Upper lobe of right lung (tissue), 1 donor: ENCODE measurements at regions of chr1 and their contacts with region 1.

Region 1: GRCh38 chr1:99180343-99180808 is 83.9 kb upstream of the PLPPR4 start:
- DNase-seq: no peak
- ATAC-seq: peak; percentile 96
- H3K4me3 ChIP-seq: no peak overlapping the region
- H3K27ac ChIP-seq: no peak overlapping the region
- H3K4me1 ChIP-seq: no peaks in the 10 kb centered on the region
- H3K27me3 ChIP-seq: no peaks in the 10 kb centered on the region
- CTCF ChIP-seq: peak; percentile 83

Region 2: GRCh38 chr1:99580451-99580850 is 400.1 kb after region 1 on chr1:
- intact Hi-C with region 1: no loop called
- DNase-seq: no peak
- ATAC-seq: no peak
- H3K4me3 ChIP-seq: no peak overlapping the region
- H3K27ac ChIP-seq: no peak overlapping the region
- H3K4me1 ChIP-seq: no peaks in the 10 kb centered on the region
- H3K27me3 ChIP-seq: no peaks in the 10 kb centered on the region
- CTCF ChIP-seq: no peak

Region 3: GRCh38 chr1:99707535-99708142 is 527.3 kb after region 1 on chr1:
- intact Hi-C with region 1: loop called (anchors 10 kb)
- DNase-seq: peak; percentile 65
- ATAC-seq: peak; percentile 95
- H3K4me3 ChIP-seq: no peak overlapping the region
- H3K27ac ChIP-seq: no peak overlapping the region
- H3K4me1 ChIP-seq: no peaks in the 10 kb centered on the region
- H3K27me3 ChIP-seq: no peaks in the 10 kb centered on the region
- CTCF ChIP-seq: peak; percentile 92